Activated B cell treated with CpG ODN at 0.5 μM for 24 hours (primary cell): ENCODE measurements at regions of chr12 and their contacts with region 1.

Region 1: DNA sequence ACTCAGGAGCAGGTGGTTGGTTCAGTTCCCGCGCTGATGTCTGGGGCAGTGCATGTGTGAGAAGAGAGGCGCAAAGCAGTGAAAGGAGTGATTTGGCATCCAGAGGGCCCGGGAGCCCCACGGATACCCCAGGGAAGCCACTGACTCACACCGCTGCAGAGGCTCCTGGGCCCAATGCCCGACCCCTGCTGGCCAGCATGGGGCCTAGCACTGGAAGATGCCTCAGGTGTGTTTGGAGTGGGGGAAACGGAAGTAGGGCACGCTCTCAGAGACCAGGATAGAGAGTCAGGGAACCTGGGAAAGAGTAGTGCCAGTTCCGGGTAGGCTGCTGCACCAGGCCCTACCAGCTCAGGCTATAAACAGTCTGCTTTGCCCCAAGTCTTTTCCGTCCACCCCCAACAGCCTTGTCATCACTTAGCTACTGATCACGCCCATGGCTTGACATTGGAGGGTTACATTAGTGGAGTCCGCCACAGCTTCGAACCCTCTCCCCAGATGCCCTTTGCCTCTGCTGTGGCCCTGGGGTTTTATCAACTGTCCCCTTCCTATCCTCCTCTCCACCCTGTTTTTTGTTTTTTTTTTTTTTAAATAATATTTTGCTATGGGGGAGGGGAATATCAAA is 9.5 kb upstream of the CSAD start:
- DNase-seq: no peak
- ATAC-seq: peak; percentile 89
- H3K4me3 Mint-ChIP-seq: no peak overlapping the region
- H3K27ac Mint-ChIP-seq: peak overlapping the region; percentile 31
- H3K4me1 Mint-ChIP-seq: peaks cover 8% of the 10 kb centered on the region
- H3K27me3 Mint-ChIP-seq: no peaks in the 10 kb centered on the region
- CTCF ChIP-seq: no peak

Region 2: DNA sequence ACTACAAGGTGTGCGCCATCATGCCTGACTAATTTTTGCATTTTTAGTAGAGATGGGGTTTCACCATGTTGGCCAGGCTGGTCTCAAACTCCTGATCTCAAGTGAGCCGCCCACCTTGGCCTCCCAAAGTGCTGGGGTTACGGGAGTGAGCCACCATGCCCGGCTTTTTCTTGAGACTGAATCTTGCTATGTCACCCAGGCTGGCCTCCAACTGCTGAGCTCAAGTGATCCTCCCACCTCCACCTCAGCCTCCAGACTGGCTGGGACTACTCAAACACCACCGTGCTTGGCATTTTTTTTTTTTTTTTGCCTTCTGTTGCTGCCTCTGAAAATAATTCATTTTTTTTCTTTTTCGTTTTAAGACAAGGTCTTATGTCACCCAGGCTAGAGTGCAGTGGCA is 69.7 kb after region 1 on chr12:
- CTCF ChIA-PET with region 1: no interaction called
- POLR2A ChIA-PET with region 1: interaction called, 11 read pairs
- intact Hi-C with region 1: no loop called
- DNase-seq: no peak
- ATAC-seq: no peak
- H3K4me3 Mint-ChIP-seq: no peak overlapping the region
- H3K27ac Mint-ChIP-seq: no peak overlapping the region
- H3K4me1 Mint-ChIP-seq: peaks cover 39% of the 10 kb centered on the region
- H3K27me3 Mint-ChIP-seq: no peaks in the 10 kb centered on the region
- CTCF ChIP-seq: no peak